ENCODE measurements at regions of chr3 and their contacts with region 1.

Region 1: GRCh38 chr3:120245386-120245785 is 39.6 kb downstream of the GPR156 start:
- DNase-seq: no peak
- H3K4me3 ChIP-seq: no peak overlapping the region
- H3K27ac ChIP-seq: no peak overlapping the region
- H3K4me1 ChIP-seq: no peaks in the 10 kb centered on the region
- H3K27me3 ChIP-seq: no peaks in the 10 kb centered on the region; a peak in 1 of 7 replicates
- CTCF ChIP-seq: no peak
- EP300 ChIP-seq: no peak
- POLR2A ChIP-seq: no peak
- RAD21 ChIP-seq: no peak

Region 2: DNA sequence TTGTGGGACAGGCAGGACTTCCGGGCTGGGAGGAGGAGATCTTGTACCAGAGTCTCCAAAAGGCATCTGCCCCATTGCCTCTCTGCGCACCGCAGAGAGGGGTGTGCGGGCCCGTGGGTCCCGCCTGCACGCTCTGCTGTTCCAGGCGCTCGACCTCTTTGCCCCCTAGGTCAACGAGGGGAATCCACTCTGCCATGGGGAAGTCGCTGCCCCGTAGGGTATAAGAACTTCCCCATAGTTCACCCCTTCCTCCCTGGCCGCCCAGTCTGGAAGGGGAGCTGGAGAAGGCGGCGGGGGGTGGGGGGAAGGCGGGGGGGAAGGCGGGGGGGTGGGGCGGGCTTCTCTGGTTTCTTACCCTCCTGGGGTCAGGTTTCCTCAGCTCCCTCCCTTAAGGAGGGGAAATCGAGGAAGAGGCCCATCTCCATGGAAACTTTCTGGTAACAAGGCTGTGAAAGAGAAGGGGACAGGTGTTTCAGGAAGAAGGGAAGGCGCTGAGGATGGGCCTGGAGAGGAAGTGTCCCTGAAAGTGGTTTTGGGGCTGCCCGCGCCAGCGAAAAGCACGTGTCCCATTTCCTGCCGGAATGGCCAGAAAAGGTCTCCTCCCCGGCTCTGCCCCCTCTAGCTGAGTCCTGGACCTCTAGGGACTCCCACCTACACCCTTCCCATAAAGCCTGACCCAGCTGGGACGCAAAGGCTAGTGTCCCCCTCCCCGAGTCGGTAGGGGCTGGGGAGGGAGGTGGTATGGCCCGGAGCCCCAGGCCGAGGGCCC is 436.0 kb before region 1 on chr3:
- CTCF ChIA-PET with region 1: no interaction called
- POLR2A ChIA-PET with region 1: no interaction called
- DNase-seq: no peak
- H3K4me3 ChIP-seq: peak overlapping the region; percentile 34 to 64 (median 45); a peak in 7 of 8 replicates
- H3K27ac ChIP-seq: no peak overlapping the region; the same call in 1 of the 2 replicates
- H3K4me1 ChIP-seq: peaks cover 0 to 8% (median 3%) of the 10 kb centered on the region in 4 experiments; a peak in 5 of 7 replicates
- H3K27me3 ChIP-seq: peaks cover 0 to 6% (median 1%) of the 10 kb centered on the region in 4 experiments; a peak in 3 of 7 replicates
- CTCF ChIP-seq: no peak
- EP300 ChIP-seq: no peak
- POLR2A ChIP-seq: 0 out of 3 replicates have a peak, but pooled peaks of 1 of the 2 experiments have one; percentile 16
- RAD21 ChIP-seq: no peak

Region 3: DNA sequence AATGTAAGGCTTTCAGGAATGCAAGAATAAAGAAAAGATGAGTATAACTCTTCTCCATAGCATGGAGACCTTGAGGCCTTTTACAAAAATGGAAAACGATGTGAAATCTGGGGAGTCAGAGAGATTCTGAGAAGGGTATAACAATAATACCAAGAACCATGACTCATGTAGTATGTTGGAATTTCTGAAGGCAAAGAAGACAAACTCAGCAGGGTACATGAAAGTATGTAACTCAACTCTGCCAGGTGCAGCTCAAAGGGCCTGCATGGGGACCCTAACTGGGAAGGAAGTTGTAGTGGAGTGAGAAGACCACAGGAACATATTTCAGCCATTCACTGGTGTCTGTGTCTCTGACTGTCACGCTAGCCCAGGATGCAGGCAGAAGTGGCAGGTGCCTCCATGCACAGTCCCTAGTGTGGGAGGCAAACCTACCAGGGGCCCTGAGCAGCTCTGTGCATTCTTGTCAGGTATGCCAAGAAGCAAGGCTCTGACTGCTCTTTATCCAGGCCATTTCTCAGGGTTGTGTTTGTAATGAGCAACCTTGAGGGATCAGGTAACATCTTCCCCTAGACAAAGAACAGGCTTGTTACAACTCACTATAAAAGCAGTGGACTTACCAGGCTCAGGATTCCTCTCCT is 17.6 kb before region 1 on chr3:
- CTCF ChIA-PET with region 1: interaction called, 13 read pairs
- POLR2A ChIA-PET with region 1: no interaction called
- DNase-seq: no peak
- H3K4me3 ChIP-seq: no peak overlapping the region
- H3K27ac ChIP-seq: no peak overlapping the region
- H3K4me1 ChIP-seq: peaks cover 0 to 4% (median 3%) of the 10 kb centered on the region in 4 experiments; a peak in 4 of 7 replicates
- H3K27me3 ChIP-seq: no peaks in the 10 kb centered on the region
- CTCF ChIP-seq: no peak
- EP300 ChIP-seq: no peak
- POLR2A ChIP-seq: no peak
- RAD21 ChIP-seq: no peak

Region 4: DNA sequence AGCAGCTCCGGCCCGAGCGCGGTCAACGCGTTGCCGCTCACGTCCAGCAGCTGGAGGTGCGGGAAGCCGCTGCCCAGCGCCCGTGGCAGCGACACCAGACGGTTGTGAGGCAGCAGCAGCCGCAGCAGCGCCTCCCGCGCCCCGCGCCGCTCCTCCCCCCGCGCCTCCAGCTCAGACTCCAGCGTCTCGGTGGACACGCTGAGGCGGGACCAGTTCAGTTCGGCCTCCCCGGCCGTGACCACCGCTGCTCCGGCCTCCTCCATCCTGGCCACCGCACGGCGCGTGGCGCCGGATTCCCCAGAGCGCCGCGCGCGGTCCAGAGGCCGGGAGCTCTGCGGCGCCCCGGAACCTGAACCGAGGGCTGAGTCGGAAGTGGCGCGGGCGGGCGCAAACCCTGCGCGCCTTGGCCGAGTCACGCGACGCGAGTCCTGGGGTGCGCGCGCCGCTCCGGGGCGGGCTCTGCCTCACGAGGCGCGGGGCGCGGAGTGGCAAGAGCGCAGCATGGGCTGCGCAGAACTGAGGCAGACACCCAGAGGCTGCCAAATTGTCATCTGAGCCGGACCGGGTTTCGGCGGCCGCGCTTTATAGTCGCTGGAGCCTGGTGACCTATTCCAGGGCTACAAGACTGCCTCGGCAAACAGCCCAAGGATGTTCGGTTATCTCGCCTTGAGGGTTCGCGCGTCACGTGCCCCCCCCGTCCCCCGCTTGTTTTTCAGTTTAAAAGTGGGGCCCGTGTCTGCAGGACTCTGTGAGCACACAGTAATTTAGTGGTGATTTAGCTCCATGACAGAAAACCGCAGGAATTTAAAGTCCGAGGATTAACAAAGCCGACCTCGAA is 103.8 kb after region 1 on chr3 and contains the start of gene LRRC58:
- CTCF ChIA-PET with region 1: interaction called, 14 read pairs
- POLR2A ChIA-PET with region 1: no interaction called
- DNase-seq: peak; percentile 31 to 86
- H3K4me3 ChIP-seq: peak within 1 kb of the TSS; percentile 73 to 88 (median 76)
- H3K27ac ChIP-seq: peak within 1 kb of the TSS; percentile 25; the same call in 1 of the 2 replicates
- H3K4me1 ChIP-seq: peaks cover 0 to 4% (median 2%) of the 10 kb centered on the region in 4 experiments; a peak in 2 of 7 replicates
- H3K27me3 ChIP-seq: peaks cover 0 to 6% (median 3%) of the 10 kb centered on the region in 4 experiments; a peak in 3 of 7 replicates
- CTCF ChIP-seq: peak; percentile 18 to 25 (median 24)
- EP300 ChIP-seq: peak; percentile 1 to 4; a peak in 2 of 3 replicates
- POLR2A ChIP-seq: peak in 1 of 2 experiments; percentile 90; a peak in 2 of 3 replicates
- RAD21 ChIP-seq: no peak; a peak in 1 of 4 replicates
- total RNA-seq, gene LRRC58: 15.4 TPM in 2 replicates

Region 5: DNA sequence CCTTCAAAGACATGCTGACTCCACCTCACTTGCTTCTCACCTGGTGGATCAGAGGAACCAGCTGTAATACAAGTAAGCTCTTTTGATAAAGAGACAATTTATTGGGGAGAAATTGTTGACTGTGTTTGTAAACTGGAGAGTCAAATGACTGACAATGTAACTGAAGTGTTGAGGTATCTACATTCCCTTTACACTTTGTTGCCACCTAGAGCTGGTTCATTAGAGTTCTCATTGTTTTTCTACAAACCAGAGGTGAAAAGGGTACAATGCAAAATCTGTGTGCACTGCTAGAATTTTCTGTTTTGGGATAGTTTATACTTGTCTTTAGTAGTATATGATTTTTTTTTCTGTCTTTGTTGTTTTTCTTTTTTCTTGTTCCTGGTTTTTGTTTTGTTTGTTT is 112.4 kb after region 1 on chr3:
- CTCF ChIA-PET with region 1: interaction called, 13 read pairs
- POLR2A ChIA-PET with region 1: no interaction called
- DNase-seq: no peak
- H3K4me3 ChIP-seq: no peak overlapping the region
- H3K27ac ChIP-seq: no peak overlapping the region
- H3K4me1 ChIP-seq: no peaks in the 10 kb centered on the region
- H3K27me3 ChIP-seq: peaks cover 0 to 2% (median 0%) of the 10 kb centered on the region in 4 experiments; a peak in 1 of 7 replicates
- CTCF ChIP-seq: peak in 1 of 3 experiments; percentile 3; a peak in 2 of 4 replicates
- EP300 ChIP-seq: no peak
- POLR2A ChIP-seq: no peak
- RAD21 ChIP-seq: peak; percentile 35 to 43; a peak in 3 of 4 replicates

Region 6: GRCh38 chr3:120369000-120369399 is 123.6 kb after region 1 on chr3:
- CTCF ChIA-PET with region 1: no interaction called
- POLR2A ChIA-PET with region 1: no interaction called
- DNase-seq: no peak
- H3K4me3 ChIP-seq: no peak overlapping the region
- H3K27ac ChIP-seq: no peak overlapping the region
- H3K4me1 ChIP-seq: no peaks in the 10 kb centered on the region
- H3K27me3 ChIP-seq: no peaks in the 10 kb centered on the region
- CTCF ChIP-seq: no peak
- EP300 ChIP-seq: no peak
- POLR2A ChIP-seq: no peak
- RAD21 ChIP-seq: no peak

Region 7: DNA sequence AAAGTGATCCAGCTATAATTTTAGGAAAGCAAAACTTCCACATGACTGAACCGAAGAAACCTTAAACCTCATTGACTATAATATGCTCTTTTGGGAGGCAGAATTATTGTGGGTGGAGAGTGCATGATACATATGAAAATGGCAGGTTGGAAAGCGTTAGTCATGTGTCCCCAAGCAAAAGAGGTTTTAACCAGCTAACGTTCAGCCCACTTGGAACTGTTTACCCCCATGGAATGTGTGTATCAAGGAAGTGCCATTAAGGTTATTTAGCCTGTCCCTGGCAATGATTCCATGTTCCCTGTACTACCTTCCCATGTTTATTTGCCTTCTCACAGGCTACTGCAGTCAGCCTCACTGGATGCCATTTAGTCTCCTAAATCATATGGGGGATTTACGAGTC is 147.9 kb after region 1 on chr3:
- CTCF ChIA-PET with region 1: interaction called, 17 read pairs
- POLR2A ChIA-PET with region 1: no interaction called
- DNase-seq: no peak
- H3K4me3 ChIP-seq: no peak overlapping the region
- H3K27ac ChIP-seq: no peak overlapping the region
- H3K4me1 ChIP-seq: no peaks in the 10 kb centered on the region
- H3K27me3 ChIP-seq: no peaks in the 10 kb centered on the region
- CTCF ChIP-seq: no peak
- EP300 ChIP-seq: no peak
- POLR2A ChIP-seq: peak in 1 of 2 experiments; percentile 18; a peak in 1 of 3 replicates
- RAD21 ChIP-seq: no peak

Region 8: GRCh38 chr3:120558771-120559241 is 313.4 kb after region 1 on chr3:
- CTCF ChIA-PET with region 1: interaction called, 14 read pairs
- POLR2A ChIA-PET with region 1: interaction called, 3 read pairs
- DNase-seq: peak in 1 of 2 experiments; percentile 92
- H3K4me3 ChIP-seq: peak overlapping the region; percentile 73 to 81 (median 76); a peak in 7 of 8 replicates
- H3K27ac ChIP-seq: no peak overlapping the region
- H3K4me1 ChIP-seq: peaks cover 4 to 13% (median 6%) of the 10 kb centered on the region in 4 experiments; a peak in 6 of 7 replicates
- H3K27me3 ChIP-seq: peaks cover 0 to 3% (median 0%) of the 10 kb centered on the region in 4 experiments; a peak in 2 of 7 replicates
- CTCF ChIP-seq: peak; percentile 83 to 90 (median 86)
- EP300 ChIP-seq: peak in 1 of 2 experiments; percentile 76; a peak in 1 of 3 replicates
- POLR2A ChIP-seq: peak in 1 of 2 experiments; percentile 52; a peak in 2 of 3 replicates
- RAD21 ChIP-seq: peak; percentile 96 to 98